Activated CD4-positive, alpha-beta memory T cell treated with anti-CD3 and anti-CD28 coated beads for 36 hours (primary cell): ENCODE measurements at regions of chr1 and their contacts with region 1.

Region 1: DNA sequence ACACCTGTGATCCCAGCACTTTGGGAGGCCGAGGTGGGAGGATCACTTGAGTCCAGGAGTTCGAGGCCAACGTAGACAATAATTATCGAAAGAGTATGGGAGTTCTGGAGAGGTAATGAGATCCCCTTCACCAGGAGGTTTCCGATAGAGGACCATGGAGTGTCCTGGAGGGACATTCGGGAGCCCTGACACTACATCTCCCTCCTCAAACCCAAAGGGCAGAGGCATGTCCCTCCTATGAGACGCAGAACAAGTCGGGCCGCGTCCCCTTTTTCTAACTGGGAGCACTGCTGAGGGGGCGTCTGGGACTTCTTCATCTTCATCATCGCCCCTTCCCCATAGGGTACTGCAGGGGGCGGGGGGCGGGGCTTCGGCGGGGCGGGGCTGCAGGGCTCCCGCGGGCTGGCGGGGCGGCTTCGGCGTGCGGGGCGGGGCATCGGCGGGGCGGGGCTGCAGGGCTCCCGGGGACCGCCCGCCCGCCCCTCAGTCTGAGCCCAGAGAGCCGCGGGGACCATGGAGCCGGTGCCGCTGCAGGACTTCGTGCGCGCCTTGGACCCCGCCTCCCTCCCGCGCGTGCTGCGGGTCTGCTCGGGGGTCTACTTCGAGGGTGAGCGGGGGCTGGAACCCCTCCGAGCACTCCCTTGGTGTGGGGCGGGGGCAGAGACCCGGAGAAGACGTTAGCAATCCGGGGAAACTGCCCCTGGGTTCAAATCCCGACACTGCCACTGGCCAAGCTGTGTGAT is at the start of gene THEMIS2:
- DNase-seq: peak; percentile 87
- H3K4me3 Mint-ChIP-seq: peak within 1 kb of the TSS; percentile 92
- H3K27ac Mint-ChIP-seq: peak within 1 kb of the TSS; percentile 84
- H3K4me1 Mint-ChIP-seq: peaks cover 37% of the 10 kb centered on the region
- H3K27me3 Mint-ChIP-seq: no peaks in the 10 kb centered on the region
- total RNA-seq, gene THEMIS2: 27.4 to 29.3 TPM

Region 2: GRCh38 chr1:27752360-27752759 is 119.9 kb before region 1 on chr1:
- CTCF ChIA-PET with region 1: no interaction called
- POLR2A ChIA-PET with region 1: no interaction called
- intact Hi-C with region 1: no loop called
- DNase-seq: no peak
- H3K4me3 Mint-ChIP-seq: no peak overlapping the region
- H3K27ac Mint-ChIP-seq: no peak overlapping the region
- H3K4me1 Mint-ChIP-seq: no peaks in the 10 kb centered on the region
- H3K27me3 Mint-ChIP-seq: no peaks in the 10 kb centered on the region

Region 3: DNA sequence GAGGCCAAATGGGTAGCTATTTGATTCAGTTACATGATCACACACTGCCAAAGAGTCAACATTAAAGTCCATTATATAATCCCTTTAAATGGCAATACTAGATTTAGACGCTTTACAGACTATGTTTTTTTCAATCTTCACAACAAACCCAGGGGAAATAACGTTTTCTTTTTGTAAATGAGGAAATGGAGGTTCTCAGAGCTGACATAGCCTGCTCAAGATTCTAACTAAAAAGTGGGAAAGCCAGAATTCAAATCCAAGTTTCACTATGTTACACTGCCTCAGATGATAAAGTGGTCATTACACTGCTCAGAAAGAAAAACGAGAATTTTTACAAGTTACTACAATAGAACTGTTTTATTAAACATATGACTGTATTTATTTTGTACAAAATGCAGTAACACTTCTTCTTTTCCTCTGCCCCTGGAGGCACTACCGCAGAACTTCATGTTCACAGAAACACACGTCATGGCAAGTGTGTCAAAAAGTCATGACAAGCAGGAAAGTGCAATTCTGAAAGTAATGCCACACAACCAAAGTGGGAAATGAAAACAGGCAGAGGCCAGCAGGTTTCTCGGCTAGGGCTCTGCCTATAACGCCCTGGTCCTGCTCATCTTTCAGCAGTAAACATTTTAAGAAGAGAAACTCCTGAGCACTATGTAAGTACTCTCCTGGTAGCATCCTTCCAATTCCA is 19.1 kb after region 1 on chr1:
- CTCF ChIA-PET with region 1: no interaction called
- POLR2A ChIA-PET with region 1: interaction called, 10 read pairs
- intact Hi-C with region 1: loop called (anchors 2 kb)
- DNase-seq: peak; percentile 66
- H3K4me3 Mint-ChIP-seq: no peak overlapping the region
- H3K27ac Mint-ChIP-seq: peak overlapping the region; percentile 86
- H3K4me1 Mint-ChIP-seq: peaks cover 51% of the 10 kb centered on the region
- H3K27me3 Mint-ChIP-seq: no peaks in the 10 kb centered on the region